ENCODE measurements at regions of chr19 and their contacts with region 1.

Region 1: GRCh38 chr19:46704379-46705076 is 12.4 kb downstream of the PRKD2 start:
- DNase-seq: peak; percentile 81
- H3K4me3 ChIP-seq: no peak overlapping the region
- H3K27ac ChIP-seq: no peak overlapping the region
- H3K4me1 ChIP-seq: no peaks in the 10 kb centered on the region
- H3K27me3 ChIP-seq: no peaks in the 10 kb centered on the region
- CTCF ChIP-seq: peak; percentile 92 to 99 (median 97)
- EP300 ChIP-seq: no peak
- POLR2A ChIP-seq: no peak

Region 2: DNA sequence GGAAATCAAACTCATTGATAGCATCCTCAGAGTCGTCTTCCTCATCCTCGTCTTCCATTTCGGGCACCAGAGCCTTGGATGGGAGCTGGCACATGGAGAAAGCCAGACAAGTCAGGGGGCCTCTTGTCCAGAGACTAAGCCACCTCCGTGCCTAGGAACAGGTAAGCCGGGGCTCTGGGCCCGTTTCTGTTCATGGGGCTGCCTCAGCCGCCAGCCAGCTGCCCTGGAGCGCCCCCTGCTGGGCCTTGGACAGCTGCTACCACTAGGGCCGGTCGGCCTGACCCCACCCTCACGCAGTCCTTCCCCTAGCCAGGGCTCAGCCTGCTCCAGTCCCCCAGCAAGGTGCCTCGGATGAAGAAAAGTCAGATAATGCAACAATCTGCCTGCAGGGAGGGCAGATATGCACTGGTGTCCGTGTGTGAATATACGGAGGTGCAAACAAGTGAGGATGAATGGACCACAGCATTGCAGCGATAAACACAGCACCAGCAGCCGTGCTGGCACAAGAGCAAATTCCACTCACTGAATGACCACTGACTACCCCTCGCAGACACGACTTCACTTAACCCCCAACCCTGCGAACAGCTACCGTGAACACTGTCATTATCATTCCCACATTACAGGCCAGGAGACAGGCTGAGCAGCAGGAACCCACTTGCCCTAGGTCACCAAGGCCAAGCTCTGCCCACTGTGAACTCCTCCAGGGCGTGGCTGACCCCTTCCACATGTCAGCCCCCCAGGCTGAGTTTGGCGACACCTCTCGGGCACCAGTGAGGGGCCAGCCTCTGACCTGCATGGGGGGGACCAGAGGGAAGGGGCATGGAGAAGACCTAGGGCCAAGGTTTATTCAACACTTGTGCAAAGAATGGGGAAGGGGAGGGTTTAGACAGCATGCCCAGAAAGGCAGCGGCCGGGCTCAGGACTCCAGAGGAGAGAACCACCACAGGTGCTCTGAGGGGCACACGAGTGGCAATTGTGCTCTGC is 24.5 kb after region 1 on chr19:
- in situ Hi-C with region 1: no loop called
- intact Hi-C with region 1: loop called (anchors 2 kb)
- DNase-seq: peak; percentile 80
- H3K4me3 ChIP-seq: no peak overlapping the region
- H3K27ac ChIP-seq: peak overlapping the region in 2 of 4 donors; percentile 30 to 42
- H3K4me1 ChIP-seq: no peaks in the 10 kb centered on the region
- H3K27me3 ChIP-seq: no peaks in the 10 kb centered on the region
- CTCF ChIP-seq: peak; percentile 88 to 96 (median 93)
- EP300 ChIP-seq: no peak
- POLR2A ChIP-seq: no peak

Region 3: DNA sequence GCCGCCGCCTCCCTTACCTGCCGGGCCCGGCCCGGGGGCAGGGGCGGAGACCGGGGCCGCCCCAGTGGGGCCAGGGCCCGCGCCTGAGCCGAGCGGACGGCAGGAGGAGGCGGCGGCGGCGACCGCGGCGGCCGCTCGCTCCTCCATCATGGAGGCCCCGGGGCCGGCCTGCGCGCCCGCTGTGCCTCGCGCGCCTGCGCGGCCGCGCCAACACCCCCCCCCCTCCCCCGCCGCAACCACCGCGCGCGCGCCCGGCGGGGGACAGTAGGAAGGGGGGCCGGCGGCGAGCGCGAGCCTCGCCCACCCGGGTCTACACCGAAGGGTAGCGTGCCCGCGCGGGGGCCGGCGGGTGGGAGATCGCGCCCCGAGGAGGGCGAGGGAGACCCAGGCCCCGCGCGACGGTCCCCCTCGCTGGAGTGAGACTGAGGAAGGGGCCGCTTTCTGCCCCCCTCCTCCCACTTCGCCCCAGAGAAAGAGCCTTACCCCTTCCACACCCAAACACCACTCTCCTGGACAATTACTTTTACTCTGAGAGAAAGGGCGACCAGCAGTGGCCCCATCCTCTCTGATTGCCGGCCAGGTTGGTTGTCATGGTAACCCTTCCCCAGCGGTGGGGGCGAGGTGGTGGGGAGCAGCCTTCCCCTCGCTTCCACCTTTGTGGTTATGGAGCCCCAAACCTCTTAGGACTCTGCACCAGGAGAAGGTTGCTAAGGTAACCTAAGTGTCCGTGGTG is 41.9 kb after region 1 on chr19 and contains the start of gene STRN4:
- in situ Hi-C with region 1: no loop called
- intact Hi-C with region 1: loop called (anchors 5 kb)
- DNase-seq: peak; percentile 57
- H3K4me3 ChIP-seq: peak within 1 kb of the TSS; percentile 92 to 100 (median 96)
- H3K27ac ChIP-seq: peak within 1 kb of the TSS; percentile 88 to 96 (median 94)
- H3K4me1 ChIP-seq: peaks cover 11 to 34% (median 19%) of the 10 kb centered on the region in 4 donors
- H3K27me3 ChIP-seq: no peaks in the 10 kb centered on the region
- CTCF ChIP-seq: no peak
- EP300 ChIP-seq: no peak
- POLR2A ChIP-seq: no peak
- total RNA-seq, gene STRN4: 81.6 to 306 (median 174) TPM

Region 4: DNA sequence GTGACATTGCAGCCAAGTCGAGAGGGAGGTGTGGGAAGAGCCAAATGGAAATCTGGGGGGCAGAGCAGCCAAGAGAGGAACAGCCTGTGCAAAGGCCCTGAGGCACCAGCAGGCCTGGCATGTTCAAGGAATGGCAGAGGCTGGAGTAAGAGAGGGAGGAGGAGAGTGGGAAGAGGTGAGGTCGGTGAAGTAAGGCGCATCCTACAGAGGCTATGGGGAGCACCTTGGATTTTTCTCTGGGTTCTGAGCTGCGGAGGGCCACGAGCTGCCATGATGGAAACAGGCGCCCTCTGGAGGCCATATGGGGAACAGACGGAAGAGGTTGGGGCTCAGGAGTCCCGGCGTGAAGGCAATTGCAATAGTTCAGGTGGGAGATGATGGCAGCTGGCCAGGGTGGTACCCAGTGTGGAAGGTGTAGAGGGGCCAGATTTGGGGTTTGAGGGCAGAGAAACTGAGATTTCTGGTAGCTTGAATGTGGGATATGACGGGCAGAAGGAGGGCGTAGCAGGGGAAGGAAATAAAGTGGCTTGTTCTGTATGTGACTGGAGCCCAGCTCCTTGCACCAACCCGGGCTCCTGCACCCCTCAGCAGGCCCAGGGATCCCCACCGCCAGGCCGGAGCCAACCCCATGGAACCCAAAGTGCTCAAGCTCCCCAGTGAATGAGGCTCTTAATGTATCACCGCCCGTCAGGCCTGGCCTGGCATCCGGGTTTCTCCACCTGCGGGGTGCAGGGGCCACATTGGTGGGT is 62.2 kb after region 1 on chr19:
- in situ Hi-C with region 1: no loop called
- intact Hi-C with region 1: no loop called
- DNase-seq: peak; percentile 51
- H3K4me3 ChIP-seq: no peak overlapping the region
- H3K27ac ChIP-seq: peak overlapping the region in 1 of 4 donors; percentile 75
- H3K4me1 ChIP-seq: peaks cover 3 to 43% (median 24%) of the 10 kb centered on the region in 4 donors
- H3K27me3 ChIP-seq: no peaks in the 10 kb centered on the region
- CTCF ChIP-seq: peak; percentile 57 to 69 (median 64)
- EP300 ChIP-seq: no peak
- POLR2A ChIP-seq: no peak